HAP-1 (cell line): ENCODE measurements at regions of chr11 and their contacts with region 1.

Region 1: DNA sequence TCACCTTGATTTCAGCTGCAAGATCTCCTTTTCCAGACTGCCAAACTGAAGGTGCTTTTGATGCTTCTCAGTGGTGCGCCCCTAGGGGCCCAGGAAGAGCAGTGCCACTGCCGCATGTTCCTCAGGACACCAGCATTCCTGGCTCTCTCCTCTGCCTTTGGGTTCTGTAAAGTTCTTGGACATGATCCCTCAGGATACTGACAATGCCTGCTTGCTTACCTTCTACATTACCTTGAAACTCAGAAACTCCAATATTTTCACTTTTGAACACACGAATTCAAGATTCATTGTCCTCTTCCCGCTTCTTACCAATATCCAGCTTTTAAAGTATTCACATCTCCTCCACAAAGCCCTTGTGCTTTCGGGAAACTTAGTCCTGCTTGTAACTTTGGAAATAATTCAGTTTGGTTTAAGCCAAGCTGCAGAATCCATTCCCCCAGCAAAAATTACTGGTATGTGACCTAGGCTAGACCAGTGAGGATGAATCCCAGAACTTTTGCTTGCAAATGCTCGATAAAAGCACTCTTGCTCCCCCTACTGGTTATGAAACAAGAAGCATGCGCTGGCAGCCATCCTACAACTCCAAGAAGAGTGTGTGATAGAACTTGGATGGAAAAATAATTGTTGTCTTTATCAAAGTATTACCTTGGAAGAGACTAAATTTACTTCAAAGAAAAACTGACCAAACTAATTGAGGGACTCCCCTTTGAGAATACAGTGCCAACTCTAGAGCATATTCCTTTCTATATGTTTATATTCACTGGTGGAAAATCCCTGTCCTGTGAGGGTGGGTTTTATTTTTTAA is 16.5 kb upstream of the OR5B21 start:
- DNase-seq: peak; percentile 54 to 74
- H3K4me3 ChIP-seq: no peak overlapping the region
- H3K4me1 ChIP-seq: 0 out of 2 replicates have a peak, but pooled peaks cover 2% of the 10 kb centered on the region
- H3K27me3 ChIP-seq: 0 out of 2 replicates have a peak, but pooled peaks cover 3% of the 10 kb centered on the region

Region 2: GRCh38 chr11:57345555-57346211 is 1178.8 kb before region 1 on chr11:
- in situ Hi-C with region 1: loop called (anchors 25 kb)
- DNase-seq: peak; percentile 52 to 86
- H3K4me3 ChIP-seq: no peak overlapping the region
- H3K4me1 ChIP-seq: peaks cover 20% of the 10 kb centered on the region
- H3K27me3 ChIP-seq: no peaks in the 10 kb centered on the region

Region 3: DNA sequence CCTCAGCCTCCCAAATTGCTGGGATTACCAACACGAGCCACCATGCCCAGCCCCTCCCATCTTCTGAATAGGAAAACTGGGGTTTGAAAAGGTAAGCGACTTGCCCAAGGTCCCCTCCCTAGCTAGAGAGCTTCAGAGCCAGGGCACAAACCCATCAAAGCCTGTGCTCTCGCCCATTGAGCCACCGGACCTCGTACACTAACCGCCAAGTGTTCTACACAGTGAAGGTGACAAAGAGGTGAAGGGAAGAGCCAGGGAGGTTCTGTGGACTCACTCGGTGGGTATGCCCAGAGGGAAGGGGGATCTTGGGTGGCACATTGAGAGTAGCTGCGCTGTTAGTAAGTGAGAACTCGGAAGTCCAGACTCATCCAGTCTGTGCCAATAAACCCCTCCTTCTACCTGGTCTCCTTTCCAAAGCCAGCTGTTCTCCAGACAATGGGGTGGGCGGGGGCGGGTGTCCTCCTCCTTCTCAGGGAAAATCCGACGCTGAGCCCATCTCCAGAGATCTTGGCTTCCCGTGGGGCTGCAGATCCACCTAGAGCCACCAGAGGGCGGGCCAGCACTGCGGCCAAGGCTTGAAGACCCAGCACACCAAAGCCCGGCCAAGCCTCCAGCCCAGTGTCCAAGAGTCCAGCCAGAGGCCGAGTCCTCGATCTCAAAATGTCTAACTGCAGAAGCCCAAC is 1067.3 kb before region 1 on chr11:
- in situ Hi-C with region 1: loop called (anchors 25 kb)
- DNase-seq: peak; percentile 55 to 90
- H3K4me3 ChIP-seq: no peak overlapping the region
- H3K4me1 ChIP-seq: peaks cover 13% of the 10 kb centered on the region
- H3K27me3 ChIP-seq: peaks cover 12% of the 10 kb centered on the region

Region 4: GRCh38 chr11:57842873-57843272 is 681.6 kb before region 1 on chr11:
- in situ Hi-C with region 1: loop called (anchors 25 kb)
- DNase-seq: no peak
- H3K4me3 ChIP-seq: no peak overlapping the region
- H3K4me1 ChIP-seq: no peaks in the 10 kb centered on the region
- H3K27me3 ChIP-seq: peaks cover 3% of the 10 kb centered on the region; the same call in 1 of the 2 replicates

Region 5: DNA sequence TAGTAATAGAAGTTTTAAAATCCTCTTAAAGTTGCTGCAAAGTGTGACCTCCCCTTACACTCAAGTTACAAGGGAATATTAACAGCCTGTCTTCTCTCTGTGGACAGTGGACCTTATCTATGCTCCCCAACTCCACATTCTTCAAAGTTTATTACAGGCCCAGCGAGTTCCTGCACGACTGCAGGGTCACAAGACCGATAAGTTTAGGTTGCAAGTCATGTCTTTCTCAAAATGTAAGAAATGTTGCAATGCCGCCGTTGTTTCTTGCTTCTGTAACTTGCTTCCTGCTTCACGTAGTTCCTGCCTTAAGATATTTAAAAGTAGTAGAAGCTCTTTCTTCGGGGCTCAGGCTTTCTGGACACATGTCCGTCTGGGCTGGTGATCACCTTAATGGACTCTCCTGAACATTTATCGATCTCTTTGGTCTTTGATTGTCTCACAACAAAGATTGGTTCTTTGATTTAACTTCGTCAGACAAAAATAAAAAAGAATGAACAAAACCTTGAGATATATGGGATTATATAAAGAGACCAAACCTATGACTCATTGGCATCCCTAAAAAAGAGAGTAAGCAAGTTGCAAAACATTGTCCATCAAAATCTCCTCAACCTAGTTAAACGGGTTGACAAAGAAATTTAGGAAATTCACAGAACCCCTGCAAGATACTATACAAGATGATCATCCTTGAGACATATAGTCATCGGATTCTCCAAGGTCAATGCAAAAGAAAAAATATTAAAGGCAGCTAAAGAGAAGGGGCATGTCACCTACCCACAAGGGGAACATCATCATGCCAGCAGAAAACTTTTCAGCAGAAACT is 252.7 kb after region 1 on chr11:
- in situ Hi-C with region 1: no loop called
- DNase-seq: no peak
- H3K4me3 ChIP-seq: no peak overlapping the region
- H3K4me1 ChIP-seq: no peaks in the 10 kb centered on the region
- H3K27me3 ChIP-seq: no peaks in the 10 kb centered on the region